Gastrocnemius medialis (tissue), 4 donors: ENCODE measurements at regions of chr15 and their contacts with region 1.

Region 1: GRCh38 chr15:41917767-41918430 is 24.0 kb upstream of the SPTBN5 start:
- DNase-seq: peak; percentile 93
- ATAC-seq: peak; percentile 87 to 90
- H3K4me3 ChIP-seq: no peak overlapping the region
- H3K27ac ChIP-seq: peak overlapping the region; percentile 84 to 87 (median 86)
- H3K4me1 ChIP-seq: peaks cover 62 to 74% of the 10 kb centered on the region in 2 donors
- H3K27me3 ChIP-seq: no peaks in the 10 kb centered on the region
- CTCF ChIP-seq: no peak
- POLR2A ChIP-seq: no peak

Region 2: DNA sequence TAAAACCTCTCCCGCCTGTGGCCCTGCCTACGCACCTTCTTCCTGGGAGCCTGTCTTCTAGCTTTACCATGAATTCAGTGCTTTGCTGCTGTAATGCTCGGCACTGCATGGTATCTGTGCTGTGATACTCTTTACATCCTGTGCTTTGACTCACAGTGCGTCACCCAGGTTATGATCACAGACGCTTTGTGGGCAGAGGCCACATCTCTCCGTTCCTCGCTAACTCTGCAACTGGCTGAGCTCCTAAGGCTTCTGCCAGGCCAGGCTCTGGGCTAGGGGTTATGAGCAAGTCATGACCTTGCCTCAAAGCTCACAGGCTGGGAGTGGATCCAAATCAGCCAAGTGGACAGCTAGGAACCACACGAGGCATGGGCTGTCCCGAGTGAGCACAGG is 47.2 kb before region 1 on chr15:
- in situ Hi-C with region 1: no loop called
- intact Hi-C with region 1: no loop called
- DNase-seq: no peak
- ATAC-seq: no peak
- H3K4me3 ChIP-seq: no peak overlapping the region
- H3K27ac ChIP-seq: no peak overlapping the region
- H3K4me1 ChIP-seq: no peaks in the 10 kb centered on the region
- H3K27me3 ChIP-seq: no peaks in the 10 kb centered on the region
- CTCF ChIP-seq: no peak
- POLR2A ChIP-seq: no peak

Region 3: DNA sequence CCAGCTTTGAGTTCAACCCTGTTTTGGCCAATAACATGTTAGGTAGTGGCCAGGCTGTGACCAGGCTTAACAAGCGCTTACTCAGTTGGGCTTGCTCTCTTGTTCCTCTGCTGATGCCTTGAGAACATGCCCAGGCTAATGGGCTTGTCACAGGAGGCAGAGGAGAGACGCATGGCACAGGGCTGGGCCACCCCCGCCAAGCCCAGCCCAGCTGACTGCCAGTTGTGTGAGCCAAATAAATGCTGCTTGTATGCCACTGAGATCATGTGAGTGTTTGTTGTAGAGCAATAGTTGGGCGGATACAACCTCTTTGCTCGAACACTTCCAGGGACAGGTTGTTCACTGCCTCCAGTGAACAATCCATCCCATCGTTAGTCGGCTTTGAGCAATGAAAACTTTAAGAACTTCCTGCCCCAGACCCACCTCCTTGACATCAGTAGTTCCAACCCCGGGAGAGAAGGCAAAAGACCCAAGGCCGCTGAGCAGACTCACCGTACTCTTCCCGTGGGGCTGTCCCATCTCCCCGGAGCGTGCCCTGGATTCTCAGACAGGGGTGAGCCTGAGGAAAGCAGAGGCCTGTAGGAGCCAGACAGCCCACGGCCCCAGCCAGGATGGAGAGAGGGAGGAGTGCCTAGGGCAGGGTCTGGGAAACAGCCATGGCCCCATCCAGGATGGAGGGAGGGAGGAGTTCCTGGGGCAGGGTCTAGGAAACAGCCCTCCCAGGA is 234.5 kb after region 1 on chr15:
- in situ Hi-C with region 1: no loop called
- intact Hi-C with region 1: loop called (anchors 2 kb)
- DNase-seq: peak; percentile 83 to 90
- ATAC-seq: peak; percentile 75 to 84
- H3K4me3 ChIP-seq: peak overlapping the region in 2 of 4 donors; percentile 22 to 31
- H3K27ac ChIP-seq: peak overlapping the region; percentile 93 to 100 (median 95)
- H3K4me1 ChIP-seq: peaks cover 40 to 50% of the 10 kb centered on the region in 2 donors
- H3K27me3 ChIP-seq: no peaks in the 10 kb centered on the region
- CTCF ChIP-seq: no peak
- POLR2A ChIP-seq: peak; percentile 53 to 75